ENCODE measurements at regions of chr10 and their contacts with region 1.

Region 1: DNA sequence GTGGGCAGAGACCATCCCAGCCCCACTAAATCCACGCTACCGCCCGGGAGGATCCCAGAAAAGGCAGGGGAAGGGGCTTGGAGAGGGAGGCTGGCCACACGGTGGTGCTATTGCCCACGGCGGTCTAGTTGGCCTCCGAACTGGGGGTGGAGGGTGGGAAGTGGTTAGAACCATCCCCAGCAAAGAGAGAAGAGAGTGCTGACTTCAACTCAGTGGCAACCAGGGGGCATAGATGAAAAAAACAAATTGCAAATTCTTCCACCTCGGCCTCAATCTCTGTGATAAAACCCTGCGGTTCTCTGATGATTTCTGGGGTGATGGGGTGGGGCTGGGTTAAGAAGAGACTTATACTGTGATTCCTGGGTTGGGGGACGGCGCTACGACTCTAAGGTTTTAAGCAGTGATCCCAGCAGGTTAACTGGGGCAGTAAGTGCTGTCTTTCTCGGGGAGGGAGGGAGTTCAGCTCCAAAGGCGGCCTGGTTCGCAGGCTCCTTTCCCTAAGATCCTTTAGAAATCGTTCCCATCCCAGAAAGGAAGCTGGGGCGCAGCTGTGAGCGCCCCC is 154.5 kb upstream of the LYZL2 start:
- DNase-seq: peak; percentile 89
- ATAC-seq: peak; percentile 85 to 89

Region 2: DNA sequence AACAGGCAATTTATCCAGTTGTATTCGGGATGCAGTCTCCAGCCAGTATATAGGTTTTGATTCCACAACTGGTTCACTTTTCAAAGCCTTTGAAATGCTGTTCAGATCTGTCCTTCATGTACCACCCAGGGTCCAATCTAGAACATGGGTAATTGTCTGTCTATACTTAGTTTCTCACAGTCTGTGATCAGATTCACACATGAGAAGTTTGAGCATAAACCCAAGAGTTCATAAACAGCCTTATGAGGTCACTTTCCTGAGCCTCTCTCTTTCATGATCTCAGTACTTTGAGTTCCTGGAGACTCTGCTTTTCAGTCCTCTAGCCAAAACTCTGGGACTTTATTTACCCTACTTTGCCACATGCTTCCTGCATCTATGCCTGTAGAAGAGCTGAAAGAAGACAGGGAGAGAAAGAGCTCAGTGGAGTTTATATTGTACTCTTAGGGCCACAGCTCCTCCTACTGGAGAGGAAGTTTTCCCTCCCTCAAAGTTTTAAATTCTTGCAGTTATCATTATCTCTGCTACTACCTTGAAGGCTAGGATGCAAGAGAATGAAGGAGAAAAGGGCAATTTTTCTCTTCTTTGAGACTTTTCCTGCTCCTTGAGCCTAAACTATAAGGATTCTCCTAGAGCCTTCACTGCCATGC is 707.0 kb after region 1 on chr10:
- intact Hi-C with region 1: loop called in 1 of 2 experiments (anchors 2 kb)
- DNase-seq: no peak
- ATAC-seq: peak in 1 of 2 donors; percentile 30

Measured in left cardiac atrium (tissue), 4 donors.